ENCODE measurements at regions of chr5 and their contacts with region 1.

Region 1: GRCh38 chr5:167642779-167643517 is 648.5 kb upstream of the WWC1 start:
- DNase-seq: peak; percentile 83
- H3K4me3 ChIP-seq: peak overlapping the region in 1 of 3 experiments; percentile 9
- H3K27ac ChIP-seq: peak overlapping the region; percentile 91
- H3K4me1 ChIP-seq: peaks cover 43% of the 10 kb centered on the region
- H3K27me3 ChIP-seq: no peaks in the 10 kb centered on the region
- CTCF ChIP-seq: no peak

Region 2: GRCh38 chr5:167232675-167233311 is 410.2 kb before region 1 on chr5:
- CTCF ChIA-PET with region 1: no interaction called
- dilution Hi-C with region 1: no loop called
- in situ Hi-C with region 1: no loop called
- intact Hi-C with region 1: no loop called
- DNase-seq: no peak
- H3K4me3 ChIP-seq: no peak overlapping the region
- H3K27ac ChIP-seq: no peak overlapping the region
- H3K4me1 ChIP-seq: peaks cover 10% of the 10 kb centered on the region
- H3K27me3 ChIP-seq: no peaks in the 10 kb centered on the region
- CTCF ChIP-seq: no peak

Region 3: DNA sequence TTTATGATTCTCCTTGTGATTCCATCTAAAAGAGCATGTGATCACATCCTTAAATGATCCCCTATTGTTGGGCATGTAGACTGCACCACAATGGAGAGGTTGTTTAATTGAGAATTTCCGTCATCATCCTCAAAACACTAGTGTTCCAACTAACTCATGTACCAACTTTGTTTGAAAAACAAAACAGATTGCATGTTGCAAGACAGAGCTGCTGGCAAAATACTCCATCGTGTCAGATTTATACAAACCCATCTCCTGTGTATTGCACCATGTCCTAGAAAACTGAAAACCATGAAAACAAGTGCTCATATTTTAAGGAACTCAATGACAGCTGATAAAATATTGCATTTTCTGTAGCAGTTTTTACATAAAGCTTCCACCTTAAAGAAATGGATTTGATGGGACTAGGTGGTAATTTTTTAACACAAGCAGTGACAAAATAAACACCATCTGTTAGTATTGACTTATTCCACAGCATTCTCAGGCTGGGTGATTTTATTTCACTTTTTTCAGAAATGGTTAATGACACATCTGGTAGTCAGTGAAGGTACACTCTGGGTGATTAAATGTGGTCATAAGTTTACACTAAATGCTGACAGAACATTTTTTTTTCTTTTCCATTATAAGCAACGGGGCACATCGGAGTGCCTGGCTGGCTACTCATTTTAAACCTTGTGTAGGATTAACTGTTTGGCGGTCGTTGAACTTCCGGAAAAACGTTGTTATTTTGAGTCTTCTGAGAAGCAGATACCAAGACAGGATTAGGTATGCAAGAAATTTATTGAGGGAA is 45.6 kb after region 1 on chr5:
- CTCF ChIA-PET with region 1: no interaction called
- dilution Hi-C with region 1: no loop called
- in situ Hi-C with region 1: no loop called
- intact Hi-C with region 1: no loop called
- DNase-seq: peak; percentile 27
- H3K4me3 ChIP-seq: no peak overlapping the region
- H3K27ac ChIP-seq: no peak overlapping the region
- H3K4me1 ChIP-seq: no peaks in the 10 kb centered on the region
- H3K27me3 ChIP-seq: no peaks in the 10 kb centered on the region
- CTCF ChIP-seq: no peak

Region 4: GRCh38 chr5:167709625-167710024 is 66.7 kb after region 1 on chr5:
- CTCF ChIA-PET with region 1: no interaction called
- dilution Hi-C with region 1: loop called (anchors 5 kb)
- in situ Hi-C with region 1: no loop called
- intact Hi-C with region 1: no loop called
- DNase-seq: no peak
- H3K4me3 ChIP-seq: no peak overlapping the region
- H3K27ac ChIP-seq: no peak overlapping the region
- H3K4me1 ChIP-seq: peaks cover 15% of the 10 kb centered on the region
- H3K27me3 ChIP-seq: no peaks in the 10 kb centered on the region
- CTCF ChIP-seq: no peak

Region 5: GRCh38 chr5:167754501-167755021 is 111.6 kb after region 1 on chr5:
- CTCF ChIA-PET with region 1: no interaction called
- dilution Hi-C with region 1: no loop called
- in situ Hi-C with region 1: no loop called
- intact Hi-C with region 1: loop called (anchors 2 kb)
- DNase-seq: no peak
- H3K4me3 ChIP-seq: no peak overlapping the region
- H3K27ac ChIP-seq: no peak overlapping the region
- H3K4me1 ChIP-seq: peaks cover 15% of the 10 kb centered on the region
- H3K27me3 ChIP-seq: no peaks in the 10 kb centered on the region
- CTCF ChIP-seq: no peak

Measured in mammary epithelial cell (primary cell).